ENCODE measurements at regions of chr1 and their contacts with region 1.

Region 1: DNA sequence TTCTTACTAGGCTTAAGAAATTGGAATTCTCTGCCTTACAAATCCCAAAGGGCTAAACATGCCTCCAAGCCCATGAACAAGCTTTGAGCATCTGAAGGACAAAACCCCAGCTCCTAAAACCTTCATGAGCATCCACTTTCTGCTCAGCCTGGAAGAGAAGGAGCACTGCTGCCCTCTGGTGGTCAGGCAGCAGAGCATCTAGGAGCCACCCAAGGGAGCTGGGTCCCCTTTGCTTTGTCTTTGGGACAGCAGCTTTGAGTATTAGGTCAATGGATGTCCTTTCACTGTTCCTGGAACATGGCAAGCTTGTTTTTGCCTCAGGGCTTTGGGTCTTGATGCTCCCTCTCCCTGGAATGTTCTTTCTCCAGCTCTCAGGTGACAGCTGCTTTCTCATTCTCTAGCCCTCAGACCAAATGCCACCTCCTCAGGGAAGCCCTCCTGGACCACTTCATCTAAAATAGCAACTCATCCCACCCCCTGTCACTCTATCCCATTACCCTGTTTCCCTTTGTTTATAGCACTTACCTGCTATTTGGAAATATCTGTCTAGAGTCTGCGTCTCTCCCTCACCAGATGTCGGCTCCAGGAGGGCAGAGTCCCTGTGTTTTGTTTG is 25.7 kb downstream of the RAB7B start:
- DNase-seq: peak; percentile 92
- H3K4me3 ChIP-seq: no peak overlapping the region
- H3K27ac ChIP-seq: no peak overlapping the region
- H3K4me1 ChIP-seq: peaks cover 0 to 4% (median 0%) of the 10 kb centered on the region in 6 donors
- H3K27me3 ChIP-seq: no peaks in the 10 kb centered on the region
- CTCF ChIP-seq: peak; percentile 85 to 99 (median 94)
- POLR2A ChIP-seq: no peak

Region 2: GRCh38 chr1:205528887-205529825 is 448.4 kb before region 1 on chr1:
- intact Hi-C with region 1: no loop called
- DNase-seq: peak; percentile 95
- H3K4me3 ChIP-seq: peak overlapping the region in 6 of 8 donors; percentile 26 to 66 (median 33)
- H3K27ac ChIP-seq: no peak overlapping the region
- H3K4me1 ChIP-seq: peaks cover 0 to 17% (median 11%) of the 10 kb centered on the region in 6 donors
- H3K27me3 ChIP-seq: no peaks in the 10 kb centered on the region
- CTCF ChIP-seq: peak; percentile 79 to 93 (median 89)
- POLR2A ChIP-seq: no peak

Region 3: DNA sequence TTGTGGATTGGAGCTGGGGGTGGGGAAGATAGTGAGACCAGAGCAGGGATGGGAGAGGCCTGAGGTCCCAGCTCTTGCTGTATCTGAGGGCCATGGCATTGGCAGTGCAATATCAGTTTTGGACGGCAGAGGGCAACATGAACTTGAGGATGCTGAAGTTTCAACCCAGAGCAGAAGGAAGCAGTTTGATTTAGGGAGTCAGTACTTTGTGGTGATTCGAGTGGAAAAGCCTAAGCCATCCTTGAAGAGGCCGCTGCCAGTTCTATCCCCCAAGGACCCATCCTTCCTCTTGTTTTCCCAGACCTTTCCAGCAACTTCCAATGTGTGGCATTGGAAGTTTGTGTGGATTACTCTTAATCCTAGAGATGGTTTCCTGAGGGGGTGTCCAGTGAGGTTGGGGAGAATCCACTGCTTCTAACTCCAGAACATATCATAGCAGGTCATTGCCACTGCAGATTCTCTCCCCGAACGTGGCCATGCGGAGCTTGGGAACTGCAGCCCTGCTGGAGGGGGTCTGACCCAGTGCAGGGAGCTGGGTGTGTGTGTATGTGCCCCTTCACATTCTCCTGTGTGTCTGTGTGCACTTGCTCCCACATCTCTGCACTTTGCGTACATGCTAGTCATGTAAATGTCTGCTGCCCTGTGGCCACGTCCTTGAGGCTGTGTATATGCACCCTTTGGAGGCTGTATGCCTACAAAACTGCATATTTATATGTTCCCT is 58.3 kb before region 1 on chr1:
- intact Hi-C with region 1: loop called (anchors 2 kb)
- DNase-seq: peak; percentile 79
- H3K4me3 ChIP-seq: no peak overlapping the region
- H3K27ac ChIP-seq: no peak overlapping the region
- H3K4me1 ChIP-seq: peaks cover 0 to 41% (median 9%) of the 10 kb centered on the region in 6 donors
- H3K27me3 ChIP-seq: peaks cover 0 to 11% (median 0%) of the 10 kb centered on the region in 7 donors
- CTCF ChIP-seq: peak; percentile 86 to 97 (median 94)
- POLR2A ChIP-seq: no peak